Gastrocnemius medialis (tissue), 4 donors: ENCODE measurements at regions of chr6 and their contacts with region 1.

Region 1: GRCh38 chr6:43516697-43517504 is at the starts of genes POLR1C and YIPF3:
- DNase-seq: peak; percentile 98
- ATAC-seq: peak; percentile 98 to 99
- H3K4me3 ChIP-seq: peak within 1 kb of the TSS; percentile 74 to 97 (median 87)
- H3K27ac ChIP-seq: peak within 1 kb of the TSS; percentile 88 to 98 (median 90)
- H3K4me1 ChIP-seq: peaks cover 28 to 32% of the 10 kb centered on the region in 2 donors
- H3K27me3 ChIP-seq: no peaks in the 10 kb centered on the region
- CTCF ChIP-seq: no peak
- POLR2A ChIP-seq: peak; percentile 70 to 74
- total RNA-seq, gene POLR1C: 13.4 to 25.1 (median 16.7) TPM
- total RNA-seq, gene YIPF3: 55.6 to 97.9 (median 73.5) TPM

Region 2: DNA sequence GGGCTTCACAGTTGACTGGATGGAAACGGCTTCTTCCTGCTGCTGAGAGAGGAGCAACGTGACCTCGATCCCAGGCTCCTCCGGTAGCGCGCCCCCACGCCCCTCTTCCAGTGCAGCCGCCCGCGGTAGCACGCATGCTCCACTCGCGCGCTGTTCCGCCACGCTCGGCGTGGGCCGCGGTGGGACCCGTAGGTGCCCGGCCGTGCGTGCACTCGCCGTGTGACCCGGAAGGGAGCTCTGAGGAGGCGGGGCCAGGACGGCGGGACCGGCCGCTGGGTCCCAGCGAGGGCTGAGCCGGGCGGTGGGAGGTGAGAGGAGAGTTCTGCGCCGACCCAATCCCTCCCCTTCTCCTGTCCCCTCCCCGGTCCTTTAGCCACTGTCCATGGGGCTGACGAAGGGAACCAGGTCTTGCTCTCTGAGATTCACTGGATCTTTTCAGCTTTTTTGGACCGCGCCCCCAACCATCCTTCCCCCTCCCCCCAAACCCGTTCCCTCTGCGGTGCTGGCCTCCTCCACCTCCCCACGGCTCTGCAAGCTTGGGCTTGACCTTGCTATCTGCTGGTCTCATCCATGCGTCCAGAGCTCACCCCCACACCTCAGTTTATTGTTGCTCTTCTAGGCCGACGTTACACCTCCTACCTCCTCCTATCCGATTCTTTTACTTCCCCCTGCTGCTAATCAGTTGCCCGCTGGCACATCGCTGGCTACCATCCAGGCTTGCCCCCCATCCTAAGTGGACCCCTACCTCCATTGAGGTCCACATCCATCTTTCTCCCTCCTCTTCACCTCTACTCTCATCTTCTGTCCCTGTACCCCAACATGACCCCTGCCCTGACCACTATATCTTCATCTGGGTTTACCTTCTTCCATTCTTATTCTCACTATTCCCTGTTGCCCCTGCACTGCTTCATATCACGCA is 334.7 kb before region 1 on chr6 and contains the start of gene CUL9:
- in situ Hi-C with region 1: no loop called
- intact Hi-C with region 1: loop called (anchors 5 kb)
- DNase-seq: peak; percentile 76 to 83
- ATAC-seq: peak; percentile 94 to 96
- H3K4me3 ChIP-seq: peak within 1 kb of the TSS; percentile 57 to 99 (median 82)
- H3K27ac ChIP-seq: peak within 1 kb of the TSS; percentile 78 to 88 (median 84)
- H3K4me1 ChIP-seq: peaks cover 16 to 22% of the 10 kb centered on the region in 2 donors
- H3K27me3 ChIP-seq: no peaks in the 10 kb centered on the region
- CTCF ChIP-seq: peak in 1 of 5 experiments; percentile 13
- POLR2A ChIP-seq: peak; percentile 50 to 72
- total RNA-seq, gene CUL9: 5.3 to 20.1 (median 7.1) TPM

Region 3: DNA sequence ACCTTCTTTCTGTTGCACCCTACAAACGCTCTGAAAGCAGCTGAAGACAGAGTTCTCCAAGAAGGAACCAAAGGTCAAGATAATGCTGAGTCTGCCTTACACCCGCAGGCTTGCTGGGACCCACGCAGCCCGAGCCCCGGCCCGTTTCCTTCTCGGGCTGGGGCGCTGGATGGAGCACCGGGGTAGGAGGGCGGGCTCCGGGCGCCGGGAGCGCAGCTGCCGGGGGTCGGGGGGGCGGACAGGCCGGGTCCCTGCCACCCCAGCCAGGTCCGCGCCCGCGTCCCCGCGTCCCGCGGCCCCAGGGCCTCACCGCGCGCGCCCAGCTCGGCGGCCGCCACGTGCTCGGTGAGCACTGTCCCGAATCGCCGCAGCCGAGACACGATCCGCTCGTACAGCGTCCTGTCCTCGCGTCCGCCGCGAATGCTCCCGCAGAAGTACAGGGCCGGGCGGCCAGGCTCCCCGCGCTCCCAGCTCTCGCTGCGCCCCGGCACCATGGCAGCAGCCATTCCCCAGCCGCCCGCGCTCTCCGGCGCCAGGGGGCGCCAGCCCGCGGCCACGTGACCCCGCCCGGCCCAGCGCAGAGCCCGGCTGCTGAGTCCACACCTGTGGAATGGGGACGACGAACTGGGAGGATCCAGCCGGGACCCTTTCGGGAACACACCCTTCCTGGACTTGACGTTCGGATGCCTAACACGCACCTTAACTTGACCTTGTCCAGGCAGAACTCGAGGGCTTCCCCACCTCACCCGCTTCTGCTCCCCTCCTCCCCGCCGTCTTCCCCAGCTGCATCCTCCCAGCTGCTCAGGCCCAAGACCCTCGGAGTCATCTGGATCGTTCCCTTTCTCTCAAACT is 287.7 kb before region 1 on chr6 and contains the start of gene DNPH1:
- in situ Hi-C with region 1: loop called in 1 of 4 experiments (anchors 25 kb)
- intact Hi-C with region 1: no loop called
- DNase-seq: peak; percentile 47 to 63
- ATAC-seq: peak; percentile 95 to 96
- H3K4me3 ChIP-seq: peak within 1 kb of the TSS; percentile 57 to 74 (median 65)
- H3K27ac ChIP-seq: peak within 1 kb of the TSS; percentile 47 to 68 (median 60)
- H3K4me1 ChIP-seq: peaks cover 4 to 6% of the 10 kb centered on the region in 2 donors
- H3K27me3 ChIP-seq: no peaks in the 10 kb centered on the region
- CTCF ChIP-seq: peak; percentile 67 to 94 (median 89)
- POLR2A ChIP-seq: no peak
- total RNA-seq, gene DNPH1: 42.3 to 87.6 (median 69.2) TPM

Region 4: GRCh38 chr6:43427406-43428111 is 89.3 kb before region 1 on chr6 and contains the start of gene ABCC10:
- in situ Hi-C with region 1: no loop called
- intact Hi-C with region 1: loop called (anchors 2 kb)
- DNase-seq: peak; percentile 85 to 92
- ATAC-seq: peak; percentile 98
- H3K4me3 ChIP-seq: peak within 1 kb of the TSS; percentile 81 to 92 (median 90)
- H3K27ac ChIP-seq: peak within 1 kb of the TSS; percentile 82 to 87 (median 87)
- H3K4me1 ChIP-seq: peaks cover 13 to 15% of the 10 kb centered on the region in 2 donors
- H3K27me3 ChIP-seq: no peaks in the 10 kb centered on the region
- CTCF ChIP-seq: peak in 2 of 5 experiments; percentile 51 to 53
- POLR2A ChIP-seq: peak; percentile 36 to 53
- total RNA-seq, gene ABCC10: 5.3 to 11.8 (median 8.6) TPM

Region 5: DNA sequence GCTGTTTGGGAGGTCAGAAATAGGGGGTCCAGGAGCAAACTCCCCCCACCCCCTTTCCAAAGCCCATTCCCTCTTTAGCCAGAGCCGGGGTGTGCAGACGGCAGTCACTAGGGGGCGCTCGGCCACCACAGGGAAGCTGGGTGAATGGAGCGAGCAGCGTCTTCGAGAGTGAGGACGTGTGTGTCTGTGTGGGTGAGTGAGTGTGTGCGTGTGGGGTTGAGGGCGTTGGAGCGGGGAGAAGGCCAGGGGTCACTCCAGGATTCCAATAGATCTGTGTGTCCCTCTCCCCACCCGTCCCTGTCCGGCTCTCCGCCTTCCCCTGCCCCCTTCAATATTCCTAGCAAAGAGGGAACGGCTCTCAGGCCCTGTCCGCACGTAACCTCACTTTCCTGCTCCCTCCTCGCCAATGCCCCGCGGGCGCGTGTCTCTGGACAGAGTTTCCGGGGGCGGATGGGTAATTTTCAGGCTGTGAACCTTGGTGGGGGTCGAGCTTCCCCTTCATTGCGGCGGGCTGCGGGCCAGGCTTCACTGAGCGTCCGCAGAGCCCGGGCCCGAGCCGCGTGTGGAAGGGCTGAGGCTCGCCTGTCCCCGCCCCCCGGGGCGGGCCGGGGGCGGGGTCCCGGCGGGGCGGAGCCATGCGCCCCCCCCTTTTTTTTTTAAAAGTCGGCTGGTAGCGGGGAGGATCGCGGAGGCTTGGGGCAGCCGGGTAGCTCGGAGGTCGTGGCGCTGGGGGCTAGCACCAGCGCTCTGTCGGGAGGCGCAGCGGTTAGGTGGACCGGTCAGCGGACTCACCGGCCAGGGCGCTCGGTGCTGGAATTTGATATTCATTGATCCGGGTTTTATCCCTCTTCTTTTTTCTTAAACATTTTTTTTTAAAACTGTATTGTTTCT is 252.9 kb after region 1 on chr6 and contains the start of gene VEGFA:
- in situ Hi-C with region 1: no loop called
- intact Hi-C with region 1: no loop called
- DNase-seq: peak; percentile 80 to 89
- ATAC-seq: peak; percentile 51 to 55
- H3K4me3 ChIP-seq: peak within 1 kb of the TSS; percentile 74 to 91 (median 85)
- H3K27ac ChIP-seq: peak within 1 kb of the TSS; percentile 94 to 100 (median 98)
- H3K4me1 ChIP-seq: peaks cover 4 to 20% of the 10 kb centered on the region in 2 donors
- H3K27me3 ChIP-seq: no peaks in the 10 kb centered on the region
- CTCF ChIP-seq: peak; percentile 99 to 100 (median 99)
- POLR2A ChIP-seq: peak; percentile 97 to 98
- total RNA-seq, gene VEGFA: 66.4 to 195 (median 149) TPM